H1 (cell line): ENCODE measurements at regions of chr12 and their contacts with region 1.

Region 1: GRCh38 chr12:88993651-88994050 is 358.6 kb downstream of the DUSP6 start:
- DNase-seq: no peak
- H3K4me3 ChIP-seq: no peak overlapping the region
- H3K27ac ChIP-seq: no peak overlapping the region
- H3K4me1 ChIP-seq: peaks cover 0 to 3% (median 0%) of the 10 kb centered on the region in 4 experiments; a peak in 1 of 7 replicates
- H3K27me3 ChIP-seq: no peaks in the 10 kb centered on the region
- CTCF ChIP-seq: peak in 2 of 3 experiments; percentile 42 to 51; a peak in 2 of 4 replicates
- EP300 ChIP-seq: no peak
- POLR2A ChIP-seq: no peak
- RAD21 ChIP-seq: peak; percentile 76 to 84

Region 2: DNA sequence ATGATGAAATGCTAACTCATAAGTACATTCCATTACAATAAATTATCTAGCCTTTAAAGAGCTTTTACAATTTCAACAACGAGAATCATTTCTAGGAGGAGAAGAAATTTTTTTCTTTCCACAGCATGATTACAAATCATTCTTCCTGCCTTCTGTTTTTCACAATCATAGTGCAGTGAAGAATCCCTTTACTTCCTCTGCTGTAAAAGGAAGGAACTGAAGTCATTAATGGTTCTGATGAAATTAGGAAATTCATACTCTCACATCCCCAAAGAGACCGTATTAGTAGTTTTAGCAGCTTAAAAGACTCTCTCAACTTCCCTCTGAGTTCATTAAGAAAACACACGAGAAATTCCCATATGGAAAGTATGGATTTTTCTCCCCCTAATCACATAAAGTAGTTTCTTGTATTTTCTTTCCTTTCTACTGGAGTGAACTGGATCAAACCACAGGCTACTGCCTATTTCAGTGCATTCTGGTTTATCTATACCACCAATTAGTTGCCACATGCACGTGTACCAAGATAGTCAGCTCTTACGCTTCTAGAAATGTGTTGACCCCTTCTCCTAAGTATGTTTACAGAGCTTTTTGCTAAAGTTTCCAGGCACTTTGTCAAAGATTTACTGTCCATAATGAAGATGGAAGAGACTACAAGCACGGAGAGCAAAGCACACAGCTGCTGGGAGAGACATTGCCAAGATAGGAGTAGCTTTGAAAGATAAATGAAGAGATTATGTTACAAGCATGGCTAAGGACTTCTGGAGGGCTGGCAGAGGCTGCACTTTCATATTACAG is 354.5 kb before region 1 on chr12:
- CTCF ChIA-PET with region 1: interaction called, 11 read pairs
- POLR2A ChIA-PET with region 1: no interaction called
- DNase-seq: no peak
- H3K4me3 ChIP-seq: no peak overlapping the region
- H3K27ac ChIP-seq: no peak overlapping the region
- H3K4me1 ChIP-seq: no peaks in the 10 kb centered on the region
- H3K27me3 ChIP-seq: no peaks in the 10 kb centered on the region
- CTCF ChIP-seq: no peak
- EP300 ChIP-seq: no peak
- POLR2A ChIP-seq: no peak
- RAD21 ChIP-seq: no peak

Region 3: DNA sequence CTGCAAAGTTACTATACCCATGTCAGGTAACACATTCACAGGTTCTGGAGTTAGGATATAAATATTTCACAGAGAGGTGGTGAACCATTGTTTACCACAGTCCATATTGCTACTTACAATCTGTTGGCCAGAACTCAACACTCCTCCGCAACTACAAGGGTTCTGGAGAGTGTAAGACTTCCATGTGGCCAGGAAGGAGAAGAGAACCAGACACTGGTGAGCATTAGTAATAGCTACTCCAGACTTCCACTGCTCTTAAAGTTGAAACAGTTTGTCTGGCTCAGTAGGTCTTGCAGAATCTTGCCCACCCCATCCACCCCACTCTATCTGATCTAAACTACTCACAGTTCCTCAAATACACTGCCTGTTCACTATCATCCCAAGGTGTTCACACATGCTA is 11.0 kb before region 1 on chr12:
- CTCF ChIA-PET with region 1: interaction called, 11 read pairs
- POLR2A ChIA-PET with region 1: interaction called, 3 read pairs
- DNase-seq: no peak
- H3K4me3 ChIP-seq: no peak overlapping the region
- H3K27ac ChIP-seq: no peak overlapping the region
- H3K4me1 ChIP-seq: peaks cover 0 to 4% (median 1%) of the 10 kb centered on the region in 4 experiments; a peak in 2 of 7 replicates
- H3K27me3 ChIP-seq: peaks cover 0 to 1% (median 0%) of the 10 kb centered on the region in 4 experiments; a peak in 1 of 7 replicates
- CTCF ChIP-seq: no peak
- EP300 ChIP-seq: no peak
- POLR2A ChIP-seq: no peak
- RAD21 ChIP-seq: no peak

Region 4: GRCh38 chr12:89051065-89051677 is 57.5 kb after region 1 on chr12:
- CTCF ChIA-PET with region 1: no interaction called
- POLR2A ChIA-PET with region 1: no interaction called
- DNase-seq: no peak
- H3K4me3 ChIP-seq: no peak overlapping the region
- H3K27ac ChIP-seq: no peak overlapping the region
- H3K4me1 ChIP-seq: no peaks in the 10 kb centered on the region
- H3K27me3 ChIP-seq: no peaks in the 10 kb centered on the region; a peak in 1 of 7 replicates
- CTCF ChIP-seq: peak in 2 of 3 experiments; percentile 63 to 79; a peak in 3 of 4 replicates
- EP300 ChIP-seq: no peak
- POLR2A ChIP-seq: no peak
- RAD21 ChIP-seq: peak; percentile 96 to 97

Region 5: DNA sequence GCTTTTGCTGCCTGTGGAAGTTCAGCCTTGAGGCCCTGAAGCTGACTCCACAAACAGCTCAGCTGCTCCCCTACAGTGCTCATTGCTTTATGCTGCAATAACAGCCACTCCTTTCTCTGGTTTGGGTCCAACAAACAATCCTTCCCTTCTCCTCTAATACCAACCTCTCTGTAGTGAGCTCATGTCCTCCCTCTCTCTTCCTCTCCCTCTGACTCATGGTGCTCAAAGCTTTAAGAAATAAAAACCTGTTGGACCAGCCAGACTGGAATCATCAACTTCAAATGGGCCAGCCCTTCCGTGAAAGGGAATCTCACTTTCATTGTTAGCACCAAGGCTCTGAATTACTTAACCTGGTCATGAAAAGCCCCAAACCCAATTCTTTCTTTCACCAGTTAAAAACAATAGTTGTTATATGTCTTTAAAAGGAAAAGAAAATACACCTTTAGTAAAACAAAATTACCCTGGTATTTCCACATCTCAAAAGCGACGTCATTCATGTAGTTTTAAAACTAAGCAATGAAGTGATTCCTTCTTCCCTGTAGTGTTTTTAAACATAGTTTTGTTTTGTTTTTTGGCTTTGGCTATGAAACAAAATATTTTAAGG is 232.3 kb after region 1 on chr12:
- CTCF ChIA-PET with region 1: no interaction called
- POLR2A ChIA-PET with region 1: no interaction called
- DNase-seq: no peak
- H3K4me3 ChIP-seq: peak overlapping the region in 1 of 4 experiments; percentile 3; a peak in 2 of 8 replicates
- H3K27ac ChIP-seq: no peak overlapping the region
- H3K4me1 ChIP-seq: peaks cover 0 to 10% (median 4%) of the 10 kb centered on the region in 4 experiments; a peak in 3 of 7 replicates
- H3K27me3 ChIP-seq: no peaks in the 10 kb centered on the region
- CTCF ChIP-seq: no peak
- EP300 ChIP-seq: peak in 1 of 2 experiments; percentile 82; a peak in 1 of 3 replicates
- POLR2A ChIP-seq: no peak
- RAD21 ChIP-seq: no peak